ENCODE measurements at regions of chr10 and their contacts with region 1.

Region 1: GRCh38 chr10:17643755-17644484 is at the start of gene STAM:
- DNase-seq: peak; percentile 93
- H3K4me3 Mint-ChIP-seq: peak within 1 kb of the TSS; percentile 88
- H3K27ac Mint-ChIP-seq: peak within 1 kb of the TSS; percentile 99
- H3K4me1 Mint-ChIP-seq: peaks cover 49% of the 10 kb centered on the region
- H3K27me3 Mint-ChIP-seq: no peaks in the 10 kb centered on the region
- total RNA-seq, gene STAM: 16.3 to 16.6 TPM

Region 2: DNA sequence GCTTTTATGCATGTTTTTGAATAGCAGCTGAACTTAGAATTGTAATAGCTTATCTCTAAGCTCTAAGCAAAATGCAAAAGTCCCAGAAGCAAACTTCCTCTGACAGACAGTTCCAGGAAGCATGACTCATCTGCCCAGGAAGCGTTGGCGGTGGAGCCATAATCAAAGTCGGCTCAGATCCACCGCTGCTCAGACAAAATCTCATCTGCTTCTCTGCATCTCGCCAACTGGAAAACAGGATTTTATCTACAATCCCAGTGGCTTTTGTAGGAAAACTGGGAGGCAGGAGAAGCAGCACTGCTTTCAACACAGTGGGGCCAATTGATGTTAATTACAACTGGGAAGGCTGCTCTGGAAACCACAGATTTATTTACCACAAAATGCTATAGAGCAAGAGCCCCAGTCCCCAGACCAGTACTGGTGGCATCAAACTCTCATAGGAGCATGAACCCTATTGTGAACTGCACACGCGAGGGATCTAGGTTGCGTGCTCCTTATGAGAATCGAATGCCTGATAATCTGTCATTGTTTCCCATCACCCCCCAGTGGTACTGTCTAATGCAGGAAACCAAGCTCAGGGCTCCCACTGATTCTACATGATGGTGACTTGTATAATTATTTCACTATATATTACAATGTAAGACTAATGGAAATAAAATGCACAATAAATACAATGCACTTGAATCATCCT is 614.2 kb before region 1 on chr10:
- CTCF ChIA-PET with region 1: no interaction called
- intact Hi-C with region 1: loop called (anchors 5 kb)
- DNase-seq: peak; percentile 94
- H3K4me3 Mint-ChIP-seq: peak overlapping the region; percentile 61
- H3K27ac Mint-ChIP-seq: peak overlapping the region; percentile 83
- H3K4me1 Mint-ChIP-seq: peaks cover 69% of the 10 kb centered on the region
- H3K27me3 Mint-ChIP-seq: no peaks in the 10 kb centered on the region

Region 3: GRCh38 chr10:17506390-17506789 is 137.5 kb before region 1 on chr10:
- CTCF ChIA-PET with region 1: no interaction called
- intact Hi-C with region 1: loop called (anchors 2 kb)
- DNase-seq: no peak
- H3K4me3 Mint-ChIP-seq: no peak overlapping the region
- H3K27ac Mint-ChIP-seq: peak overlapping the region; percentile 61
- H3K4me1 Mint-ChIP-seq: peaks cover 33% of the 10 kb centered on the region
- H3K27me3 Mint-ChIP-seq: no peaks in the 10 kb centered on the region

Region 4: GRCh38 chr10:17673456-17674061 is 29.6 kb after region 1 on chr10:
- CTCF ChIA-PET with region 1: interaction called, 4 read pairs
- intact Hi-C with region 1: loop called (anchors 1 kb)
- DNase-seq: no peak
- H3K4me3 Mint-ChIP-seq: no peak overlapping the region
- H3K27ac Mint-ChIP-seq: no peak overlapping the region
- H3K4me1 Mint-ChIP-seq: peaks cover 49% of the 10 kb centered on the region
- H3K27me3 Mint-ChIP-seq: no peaks in the 10 kb centered on the region

Region 5: DNA sequence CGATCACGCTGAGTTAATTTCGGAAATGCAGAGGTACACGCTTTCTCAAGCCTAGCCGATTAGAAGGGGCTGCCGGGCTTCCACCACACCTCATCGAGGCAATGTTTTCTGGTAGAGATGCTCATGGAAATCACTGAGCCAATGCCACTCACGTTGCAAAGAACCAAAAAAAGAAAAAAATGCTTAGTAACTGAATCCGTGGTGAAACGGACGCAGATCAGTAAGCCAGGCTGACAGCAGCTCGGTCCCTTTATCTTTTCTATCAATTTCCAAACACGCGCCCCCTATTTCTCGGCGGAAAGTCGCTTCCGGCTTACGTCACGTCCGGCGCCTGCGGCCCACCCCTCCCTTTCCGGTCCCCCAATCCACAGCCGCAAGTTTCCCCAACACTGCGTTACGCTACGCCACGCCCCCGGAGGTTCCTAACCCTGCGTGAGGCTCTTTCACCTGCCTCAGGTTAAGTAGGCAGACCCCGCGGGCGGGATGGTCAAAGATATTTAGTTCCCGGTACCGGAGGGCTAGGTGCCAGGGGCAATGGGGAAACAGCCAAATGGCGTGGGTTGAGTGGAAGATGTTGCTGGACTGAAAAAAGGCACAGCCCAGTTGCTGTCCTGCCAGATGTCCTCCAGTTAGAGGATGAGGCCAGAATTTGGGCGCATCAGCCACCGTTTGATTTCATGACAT is 1007.5 kb after region 1 on chr10 and contains the start of gene NSUN6:
- CTCF ChIA-PET with region 1: no interaction called
- intact Hi-C with region 1: loop called (anchors 1 kb)
- DNase-seq: peak; percentile 95
- H3K4me3 Mint-ChIP-seq: peak within 1 kb of the TSS; percentile 93
- H3K27ac Mint-ChIP-seq: peak within 1 kb of the TSS; percentile 94
- H3K4me1 Mint-ChIP-seq: peaks cover 28% of the 10 kb centered on the region
- H3K27me3 Mint-ChIP-seq: no peaks in the 10 kb centered on the region
- total RNA-seq, gene NSUN6: 9.8 to 11.1 TPM